Thyroid gland (tissue), 4 donors: ENCODE measurements at regions of chr4 and their contacts with region 1.

Region 1: DNA sequence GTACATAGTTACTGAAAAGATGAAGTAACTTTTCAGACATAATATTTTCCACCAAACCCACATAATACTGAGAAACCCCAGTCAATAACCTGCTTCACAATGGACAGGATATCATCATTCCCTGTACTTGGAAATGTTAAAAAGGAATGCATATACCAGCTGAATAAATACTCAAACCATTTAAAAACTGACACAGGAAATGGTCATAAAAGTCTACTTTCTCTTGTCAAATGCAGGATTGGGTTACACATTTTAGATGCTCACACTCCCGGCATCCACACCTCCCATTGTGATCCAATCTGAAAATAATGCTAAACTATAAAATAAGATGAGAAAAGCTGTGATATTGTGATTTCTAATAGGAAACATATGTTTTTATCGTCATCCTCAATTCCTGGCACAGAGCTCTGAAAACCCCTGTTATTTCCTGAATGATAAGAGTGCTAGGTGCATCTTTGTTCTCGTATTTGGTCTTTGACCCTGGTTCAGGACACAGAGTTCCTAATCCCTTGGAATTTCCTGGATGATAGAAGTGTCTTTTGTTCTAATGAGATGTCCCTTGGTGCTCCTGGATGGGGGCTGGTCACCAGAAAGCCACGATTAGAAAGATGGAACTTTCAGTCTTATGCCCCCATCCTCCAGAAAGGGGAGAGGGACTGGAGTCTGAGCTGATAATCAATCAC is 821.3 kb downstream of the TRIML1 start:
- DNase-seq: no peak
- H3K4me3 ChIP-seq: no peak overlapping the region
- H3K27ac ChIP-seq: no peak overlapping the region
- H3K4me1 ChIP-seq: no peaks in the 10 kb centered on the region
- H3K27me3 ChIP-seq: no peaks in the 10 kb centered on the region
- CTCF ChIP-seq: no peak
- POLR2A ChIP-seq: no peak

Region 2: DNA sequence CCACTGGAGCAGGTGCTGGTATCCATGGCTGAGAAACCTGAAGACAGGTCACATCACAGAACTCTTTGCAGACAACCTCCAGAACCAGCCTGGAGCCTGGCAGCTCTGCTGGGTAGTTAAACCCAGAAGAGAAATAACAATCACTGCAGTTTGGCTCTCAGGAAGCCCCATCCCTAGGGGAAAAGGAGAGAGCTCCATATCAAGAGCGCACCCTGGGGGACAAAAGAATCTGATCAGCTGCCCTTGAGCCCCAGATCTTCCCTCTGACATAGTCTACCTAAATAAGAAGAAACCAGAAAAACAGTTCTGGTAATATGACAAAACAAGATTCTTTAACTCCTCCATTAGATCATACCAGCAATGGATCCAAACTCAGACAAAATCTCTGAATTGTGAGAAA is 156.9 kb after region 1 on chr4:
- intact Hi-C with region 1: loop called (anchors 10 kb)
- DNase-seq: no peak
- H3K4me3 ChIP-seq: no peak overlapping the region
- H3K27ac ChIP-seq: no peak overlapping the region
- H3K4me1 ChIP-seq: no peaks in the 10 kb centered on the region
- H3K27me3 ChIP-seq: no peaks in the 10 kb centered on the region
- CTCF ChIP-seq: no peak
- POLR2A ChIP-seq: no peak